Psoas muscle (tissue), 8 donors: ENCODE measurements at regions of chr7 and their contacts with region 1.

Region 1: GRCh38 chr7:98240961-98241674 is 10.9 kb downstream of the TECPR1 start:
- DNase-seq: peak in 1 of 2 donors; percentile 73
- ATAC-seq: peak; percentile 63 to 83 (median 69)
- H3K4me3 ChIP-seq: no peak overlapping the region
- H3K27ac ChIP-seq: no peak overlapping the region
- H3K4me1 ChIP-seq: no peaks in the 10 kb centered on the region
- H3K27me3 ChIP-seq: no peaks in the 10 kb centered on the region
- CTCF ChIP-seq: peak; percentile 67

Region 2: DNA sequence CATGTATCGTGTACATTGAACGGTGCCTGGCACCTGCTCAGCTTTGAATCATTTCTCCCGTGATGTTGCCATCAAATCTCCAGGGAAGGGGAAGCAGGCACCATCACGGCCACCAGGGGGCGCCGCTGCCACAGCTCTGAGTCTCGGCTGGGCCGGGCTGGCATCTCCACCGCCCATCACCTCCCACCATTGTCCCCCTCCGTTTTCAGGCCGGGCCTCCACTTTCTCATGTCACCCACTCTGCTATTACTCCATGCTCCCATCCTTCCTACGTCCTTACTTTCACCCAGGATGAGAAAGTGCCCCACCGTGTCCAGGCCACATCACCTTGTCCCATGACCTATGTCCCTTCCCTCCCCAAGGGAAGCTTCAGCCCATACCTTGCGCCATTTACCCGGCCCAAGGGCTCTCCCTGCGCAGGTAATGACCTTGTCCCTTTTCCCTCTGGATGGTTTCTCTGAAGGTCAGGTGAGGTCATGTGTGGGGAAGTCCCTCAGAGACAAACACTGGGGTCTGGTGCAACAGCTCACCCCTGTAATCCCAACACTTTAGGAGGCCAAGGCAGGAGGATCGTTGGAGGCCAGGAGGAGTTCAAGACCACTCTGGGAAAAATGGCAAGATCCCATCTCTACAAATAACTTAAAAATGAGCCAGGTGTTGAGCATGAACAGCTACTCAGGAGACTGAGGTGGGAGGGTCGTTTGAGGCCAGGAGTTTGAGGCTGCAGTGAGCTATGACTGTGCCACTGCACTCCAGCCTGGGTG is 219.3 kb before region 1 on chr7:
- intact Hi-C with region 1: loop called in 1 of 2 experiments (anchors 10 kb)
- DNase-seq: peak; percentile 65 to 83
- ATAC-seq: peak; percentile 61 to 88 (median 68)
- H3K4me3 ChIP-seq: no peak overlapping the region
- H3K27ac ChIP-seq: no peak overlapping the region
- H3K4me1 ChIP-seq: no peaks in the 10 kb centered on the region
- H3K27me3 ChIP-seq: no peaks in the 10 kb centered on the region
- CTCF ChIP-seq: peak; percentile 82

Region 3: GRCh38 chr7:98106647-98107445 is 134.3 kb before region 1 on chr7 and contains the start of gene LMTK2:
- intact Hi-C with region 1: loop called (anchors 5 kb)
- DNase-seq: peak; percentile 96 to 98
- ATAC-seq: peak; percentile 100
- H3K4me3 ChIP-seq: peak within 1 kb of the TSS; percentile 96
- H3K27ac ChIP-seq: peak within 1 kb of the TSS; percentile 92
- H3K4me1 ChIP-seq: peaks cover 16% of the 10 kb centered on the region
- H3K27me3 ChIP-seq: peaks cover 0 to 1% (median 0%) of the 10 kb centered on the region in 3 donors
- CTCF ChIP-seq: peak; percentile 95
- total RNA-seq, gene LMTK2: 12.7 to 25.0 (median 16.1) TPM

Region 4: DNA sequence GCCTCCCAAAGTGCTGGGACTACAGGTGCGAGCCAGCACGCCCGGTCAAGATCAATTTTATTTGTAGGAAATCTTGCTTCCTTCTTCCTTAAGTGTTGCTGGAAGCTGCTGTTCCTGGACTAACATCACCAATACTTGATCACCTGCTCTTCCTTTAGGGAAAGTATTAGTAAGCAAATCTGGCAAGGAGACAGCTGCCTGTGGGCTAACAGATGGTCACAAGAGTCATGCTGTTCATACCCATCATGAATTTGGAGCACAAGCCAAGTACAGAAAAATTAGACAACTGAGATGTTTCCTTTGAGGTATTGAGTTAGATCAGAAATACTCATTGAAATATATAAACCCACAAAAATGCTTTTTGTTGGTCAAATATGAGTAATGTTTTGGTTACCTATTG is 131.9 kb after region 1 on chr7:
- intact Hi-C with region 1: no loop called
- DNase-seq: no peak
- ATAC-seq: no peak
- H3K4me3 ChIP-seq: no peak overlapping the region
- H3K27ac ChIP-seq: no peak overlapping the region
- H3K4me1 ChIP-seq: no peaks in the 10 kb centered on the region
- H3K27me3 ChIP-seq: peaks cover 0 to 2% (median 0%) of the 10 kb centered on the region in 3 donors
- CTCF ChIP-seq: no peak